ENCODE measurements at regions of chr7 and their contacts with region 1.

Region 1: DNA sequence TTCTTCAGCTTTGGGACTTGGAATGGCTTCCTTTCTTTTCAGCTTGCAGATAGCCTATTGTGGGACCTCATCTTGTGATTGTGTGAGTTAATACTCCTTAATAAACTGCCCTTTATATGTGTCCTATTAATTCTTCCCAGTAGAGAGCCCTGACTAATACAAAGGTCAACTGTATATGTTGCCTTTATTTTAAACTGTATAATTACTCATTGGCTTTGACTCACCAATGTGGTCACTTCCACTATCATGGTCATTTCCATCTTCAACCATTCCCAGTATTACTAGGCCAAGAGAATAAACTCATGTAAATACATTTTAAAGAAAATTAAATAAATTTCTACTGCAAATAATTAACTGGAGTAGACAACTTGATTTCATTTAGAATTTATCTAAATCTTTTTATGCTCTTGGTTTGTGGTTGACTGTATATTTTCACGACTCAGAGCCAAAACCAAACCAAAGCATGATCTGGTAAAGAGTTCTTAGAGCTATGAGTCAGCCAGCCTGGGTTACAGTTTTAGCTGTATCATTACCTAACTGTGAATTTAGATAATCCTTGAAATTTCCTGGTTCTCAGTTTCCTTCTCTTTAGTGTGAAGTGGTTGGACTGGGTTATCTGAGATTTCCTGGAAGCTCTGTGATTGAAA is 188.4 kb downstream of the PPP1R3A start:
- DNase-seq: no peak
- H3K4me3 ChIP-seq: no peak overlapping the region
- H3K27ac ChIP-seq: no peak overlapping the region
- H3K4me1 ChIP-seq: no peaks in the 10 kb centered on the region
- H3K27me3 ChIP-seq: no peaks in the 10 kb centered on the region
- CTCF ChIP-seq: no peak

Region 2: GRCh38 chr7:113715981-113716856 is 14.2 kb before region 1 on chr7:
- intact Hi-C with region 1: no loop called
- DNase-seq: no peak
- H3K4me3 ChIP-seq: no peak overlapping the region
- H3K27ac ChIP-seq: peak overlapping the region; percentile 21 to 40
- H3K4me1 ChIP-seq: peaks cover 0 to 15% (median 0%) of the 10 kb centered on the region in 4 donors
- H3K27me3 ChIP-seq: no peaks in the 10 kb centered on the region
- CTCF ChIP-seq: no peak

Region 3: GRCh38 chr7:113796557-113796956 is 66.1 kb after region 1 on chr7:
- intact Hi-C with region 1: loop called (anchors 2 kb)
- DNase-seq: no peak
- H3K4me3 ChIP-seq: no peak overlapping the region
- H3K27ac ChIP-seq: peak overlapping the region in 1 of 2 donors; percentile 13
- H3K4me1 ChIP-seq: peaks cover 0 to 27% (median 11%) of the 10 kb centered on the region in 4 donors
- H3K27me3 ChIP-seq: no peaks in the 10 kb centered on the region
- CTCF ChIP-seq: no peak

Region 4: DNA sequence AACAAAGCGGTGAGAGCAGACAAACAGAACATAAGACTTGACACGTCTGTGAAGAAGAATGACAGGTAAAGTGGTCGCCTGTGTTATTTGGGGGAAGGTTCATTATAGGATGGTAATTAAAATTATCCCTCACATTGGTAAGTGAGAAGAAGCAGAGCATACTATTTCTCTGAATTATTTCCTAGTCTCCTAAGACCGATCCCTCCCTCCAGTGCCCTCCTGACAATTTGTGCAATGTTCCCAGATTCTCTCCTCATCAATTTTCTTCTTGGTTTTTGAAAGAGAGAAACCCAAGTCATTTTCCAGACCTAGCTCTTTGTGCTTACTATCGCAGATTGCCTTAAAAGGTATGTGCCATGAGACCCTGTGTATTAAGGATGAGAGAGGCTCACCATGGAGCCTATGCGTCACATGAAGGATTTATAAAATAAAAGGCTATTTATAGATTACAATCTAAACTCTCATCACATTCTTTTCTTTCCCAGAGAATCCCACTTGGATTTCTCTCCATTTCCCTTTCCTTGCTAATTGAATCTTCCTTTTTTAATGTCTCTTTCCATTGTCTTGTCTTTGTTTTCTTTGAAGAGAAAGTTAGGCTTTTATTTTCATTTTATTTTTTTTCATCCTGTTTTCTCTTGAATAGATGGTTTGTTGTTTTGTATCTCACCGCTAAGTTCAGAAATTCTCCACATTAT is 76.3 kb after region 1 on chr7:
- intact Hi-C with region 1: no loop called
- DNase-seq: no peak
- H3K4me3 ChIP-seq: no peak overlapping the region
- H3K27ac ChIP-seq: no peak overlapping the region
- H3K4me1 ChIP-seq: no peaks in the 10 kb centered on the region
- H3K27me3 ChIP-seq: no peaks in the 10 kb centered on the region
- CTCF ChIP-seq: no peak

Region 5: GRCh38 chr7:113867325-113867724 is 136.9 kb after region 1 on chr7:
- intact Hi-C with region 1: no loop called
- DNase-seq: no peak
- H3K4me3 ChIP-seq: no peak overlapping the region
- H3K27ac ChIP-seq: no peak overlapping the region
- H3K4me1 ChIP-seq: no peaks in the 10 kb centered on the region
- H3K27me3 ChIP-seq: no peaks in the 10 kb centered on the region
- CTCF ChIP-seq: no peak